GM12878 (cell line): ENCODE measurements at regions of chr9 and their contacts with region 1.

Region 1: DNA sequence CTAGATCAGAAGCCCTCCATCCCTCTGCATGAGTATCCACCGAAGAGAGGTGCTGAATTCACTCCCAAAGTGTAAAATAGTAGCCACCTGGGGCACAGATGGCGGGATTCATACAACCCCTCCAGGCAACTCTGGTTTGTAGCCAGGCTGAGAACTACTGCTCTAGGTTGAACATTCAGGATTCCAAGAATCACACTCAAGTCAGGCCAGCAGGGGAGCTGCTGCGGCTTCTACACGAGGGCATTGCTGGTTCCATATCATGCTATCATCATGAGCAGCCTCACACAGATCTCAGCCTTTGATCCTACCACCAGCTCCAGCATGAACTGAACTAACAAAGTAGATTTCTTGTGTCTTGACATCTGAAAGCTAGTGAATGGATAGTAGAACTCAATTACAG is 367.9 kb downstream of the DIRAS2 start:
- DNase-seq: no peak
- ATAC-seq: no peak
- H3K4me3 ChIP-seq: no peak overlapping the region
- H3K27ac ChIP-seq: no peak overlapping the region
- H3K4me1 ChIP-seq: no peaks in the 10 kb centered on the region
- H3K27me3 ChIP-seq: no peaks in the 10 kb centered on the region; a peak in 2 of 4 replicates
- CTCF ChIP-seq: no peak
- EP300 ChIP-seq: no peak
- POLR2A ChIP-seq: no peak
- RAD21 ChIP-seq: no peak

Region 2: GRCh38 chr9:89999534-90000370 is 275.0 kb before region 1 on chr9:
- CTCF ChIA-PET with region 1: no interaction called
- POLR2A ChIA-PET with region 1: no interaction called
- RAD21 ChIA-PET with region 1: no interaction called
- SMC1A ChIA-PET with region 1: no interaction called
- in situ Hi-C with region 1: no loop called
- intact Hi-C with region 1: no loop called
- DNase-seq: peak; percentile 61
- ATAC-seq: peak; percentile 95
- H3K4me3 ChIP-seq: peak overlapping the region; percentile 56; the same call in 1 of the 2 replicates
- H3K27ac ChIP-seq: peak overlapping the region; percentile 62
- H3K4me1 ChIP-seq: peaks cover 12% of the 10 kb centered on the region
- H3K27me3 ChIP-seq: no peaks in the 10 kb centered on the region
- CTCF ChIP-seq: no peak
- EP300 ChIP-seq: no peak
- POLR2A ChIP-seq: peak; percentile 71
- RAD21 ChIP-seq: no peak

Region 3: GRCh38 chr9:90259311-90260246 is 15.1 kb before region 1 on chr9:
- CTCF ChIA-PET with region 1: no interaction called
- POLR2A ChIA-PET with region 1: no interaction called
- RAD21 ChIA-PET with region 1: no interaction called
- SMC1A ChIA-PET with region 1: no interaction called
- in situ Hi-C with region 1: no loop called
- intact Hi-C with region 1: no loop called
- DNase-seq: no peak
- ATAC-seq: no peak
- H3K4me3 ChIP-seq: no peak overlapping the region
- H3K27ac ChIP-seq: no peak overlapping the region
- H3K4me1 ChIP-seq: peaks cover 4% of the 10 kb centered on the region; the same call in 1 of the 2 replicates
- H3K27me3 ChIP-seq: no peaks in the 10 kb centered on the region; a peak in 1 of 4 replicates
- CTCF ChIP-seq: no peak
- EP300 ChIP-seq: no peak
- POLR2A ChIP-seq: no peak
- RAD21 ChIP-seq: no peak

Region 4: GRCh38 chr9:90504486-90504885 is 229.8 kb after region 1 on chr9:
- CTCF ChIA-PET with region 1: no interaction called
- POLR2A ChIA-PET with region 1: no interaction called
- RAD21 ChIA-PET with region 1: no interaction called
- SMC1A ChIA-PET with region 1: no interaction called
- in situ Hi-C with region 1: no loop called
- intact Hi-C with region 1: no loop called
- DNase-seq: peak; percentile 7
- ATAC-seq: 0 out of 3 replicates have a peak, but pooled peaks have one; percentile 26
- H3K4me3 ChIP-seq: no peak overlapping the region
- H3K27ac ChIP-seq: no peak overlapping the region
- H3K4me1 ChIP-seq: no peaks in the 10 kb centered on the region
- H3K27me3 ChIP-seq: no peaks in the 10 kb centered on the region
- CTCF ChIP-seq: no peak
- EP300 ChIP-seq: no peak
- POLR2A ChIP-seq: no peak
- RAD21 ChIP-seq: no peak

Region 5: GRCh38 chr9:92077888-92078287 is 1803.2 kb after region 1 on chr9:
- CTCF ChIA-PET with region 1: no interaction called
- POLR2A ChIA-PET with region 1: no interaction called
- RAD21 ChIA-PET with region 1: no interaction called
- SMC1A ChIA-PET with region 1: no interaction called
- in situ Hi-C with region 1: no loop called
- intact Hi-C with region 1: loop called (anchors 5 kb)
- DNase-seq: no peak
- ATAC-seq: no peak
- H3K4me3 ChIP-seq: no peak overlapping the region
- H3K27ac ChIP-seq: no peak overlapping the region
- H3K4me1 ChIP-seq: no peaks in the 10 kb centered on the region
- H3K27me3 ChIP-seq: no peaks in the 10 kb centered on the region
- CTCF ChIP-seq: no peak
- EP300 ChIP-seq: no peak
- POLR2A ChIP-seq: no peak
- RAD21 ChIP-seq: no peak